GM12878 (cell line): ENCODE measurements at regions of chr2 and their contacts with region 1.

Region 1: GRCh38 chr2:190636373-190636772 is 12.5 kb upstream of the NAB1 start:
- DNase-seq: no peak
- ATAC-seq: 0 out of 3 replicates have a peak, but pooled peaks have one; percentile 12
- H3K4me3 ChIP-seq: no peak overlapping the region
- H3K27ac ChIP-seq: no peak overlapping the region
- H3K4me1 ChIP-seq: 0 out of 2 replicates have a peak, but pooled peaks cover 3% of the 10 kb centered on the region
- H3K27me3 ChIP-seq: no peaks in the 10 kb centered on the region
- CTCF ChIP-seq: no peak
- EP300 ChIP-seq: no peak
- POLR2A ChIP-seq: no peak
- RAD21 ChIP-seq: no peak

Region 2: DNA sequence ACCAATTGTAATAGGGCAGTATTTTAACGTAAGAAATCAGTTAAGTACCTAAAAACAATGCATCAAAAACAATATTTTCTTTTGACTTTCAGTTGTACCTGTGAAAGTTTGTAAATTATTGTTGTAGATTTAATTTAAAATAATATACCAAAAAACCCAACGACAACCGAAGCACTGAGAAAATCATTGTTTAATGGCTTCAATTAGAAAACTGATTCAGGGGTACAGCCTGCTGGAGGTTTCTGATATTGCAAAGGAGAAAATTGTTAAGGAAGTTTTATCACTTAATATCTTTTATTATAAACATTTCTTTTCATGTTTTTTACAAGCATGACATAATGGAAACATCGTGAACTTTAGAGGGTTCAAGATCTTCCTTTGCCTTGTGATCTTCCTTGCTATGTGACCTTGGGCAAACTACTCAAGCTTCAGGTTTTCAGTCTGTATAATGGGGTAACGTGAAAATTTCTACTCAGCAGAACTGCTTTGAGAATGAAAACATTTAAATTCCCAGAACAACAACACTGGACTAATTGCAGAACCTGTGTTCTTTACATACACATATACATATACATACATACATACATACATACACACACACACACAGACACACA is 167.9 kb after region 1 on chr2:
- CTCF ChIA-PET with region 1: interaction called, 11 read pairs
- POLR2A ChIA-PET with region 1: no interaction called
- RAD21 ChIA-PET with region 1: interaction called, 13 read pairs
- SMC1A ChIA-PET with region 1: interaction called, 6 read pairs
- in situ Hi-C with region 1: no loop called
- intact Hi-C with region 1: loop called (anchors 5 kb)
- DNase-seq: no peak
- ATAC-seq: no peak
- H3K4me3 ChIP-seq: no peak overlapping the region
- H3K27ac ChIP-seq: no peak overlapping the region
- H3K4me1 ChIP-seq: peaks cover 5% of the 10 kb centered on the region; the same call in 1 of the 2 replicates
- H3K27me3 ChIP-seq: no peaks in the 10 kb centered on the region
- CTCF ChIP-seq: peak; percentile 34 to 63 (median 48); a peak in 5 of 6 replicates
- EP300 ChIP-seq: no peak
- POLR2A ChIP-seq: no peak
- RAD21 ChIP-seq: peak; percentile 89

Region 3: DNA sequence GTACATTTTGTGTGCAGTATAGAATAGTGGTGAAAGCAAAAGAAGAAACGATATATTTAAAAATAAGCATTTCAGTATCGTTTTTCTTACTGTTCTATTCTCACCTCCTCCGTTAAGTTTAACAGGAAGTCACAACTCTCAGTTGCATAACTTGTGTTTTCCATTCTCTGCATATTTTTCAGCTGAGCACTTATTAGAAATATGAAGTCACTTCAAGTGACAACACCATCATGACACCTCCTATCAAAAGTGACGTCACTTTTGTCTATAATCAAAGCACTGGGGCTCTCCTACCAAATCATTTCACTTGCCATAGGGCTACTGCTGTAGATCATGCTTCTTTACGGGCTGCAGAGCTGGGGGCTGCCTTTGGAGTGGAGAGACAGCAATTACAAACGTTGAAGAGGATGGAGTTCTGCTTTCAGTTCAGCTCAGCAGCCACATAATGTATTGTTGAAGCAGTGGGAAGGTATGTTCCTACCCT is 478.1 kb after region 1 on chr2:
- CTCF ChIA-PET with region 1: no interaction called
- POLR2A ChIA-PET with region 1: no interaction called
- RAD21 ChIA-PET with region 1: no interaction called
- SMC1A ChIA-PET with region 1: no interaction called
- in situ Hi-C with region 1: no loop called
- intact Hi-C with region 1: no loop called
- DNase-seq: peak; percentile 55
- ATAC-seq: peak; percentile 79
- H3K4me3 ChIP-seq: 0 out of 2 replicates have a peak overlapping the region, but pooled peaks have one; percentile 19
- H3K27ac ChIP-seq: peak overlapping the region; percentile 38; the same call in 1 of the 2 replicates
- H3K4me1 ChIP-seq: peaks cover 35% of the 10 kb centered on the region
- H3K27me3 ChIP-seq: no peaks in the 10 kb centered on the region
- CTCF ChIP-seq: no peak
- EP300 ChIP-seq: peak in 1 of 2 experiments; percentile 46; a peak in 1 of 4 replicates
- POLR2A ChIP-seq: no peak
- RAD21 ChIP-seq: no peak